Mammary epithelial cell (primary cell): ENCODE measurements at regions of chr1 and their contacts with region 1.

Region 1: DNA sequence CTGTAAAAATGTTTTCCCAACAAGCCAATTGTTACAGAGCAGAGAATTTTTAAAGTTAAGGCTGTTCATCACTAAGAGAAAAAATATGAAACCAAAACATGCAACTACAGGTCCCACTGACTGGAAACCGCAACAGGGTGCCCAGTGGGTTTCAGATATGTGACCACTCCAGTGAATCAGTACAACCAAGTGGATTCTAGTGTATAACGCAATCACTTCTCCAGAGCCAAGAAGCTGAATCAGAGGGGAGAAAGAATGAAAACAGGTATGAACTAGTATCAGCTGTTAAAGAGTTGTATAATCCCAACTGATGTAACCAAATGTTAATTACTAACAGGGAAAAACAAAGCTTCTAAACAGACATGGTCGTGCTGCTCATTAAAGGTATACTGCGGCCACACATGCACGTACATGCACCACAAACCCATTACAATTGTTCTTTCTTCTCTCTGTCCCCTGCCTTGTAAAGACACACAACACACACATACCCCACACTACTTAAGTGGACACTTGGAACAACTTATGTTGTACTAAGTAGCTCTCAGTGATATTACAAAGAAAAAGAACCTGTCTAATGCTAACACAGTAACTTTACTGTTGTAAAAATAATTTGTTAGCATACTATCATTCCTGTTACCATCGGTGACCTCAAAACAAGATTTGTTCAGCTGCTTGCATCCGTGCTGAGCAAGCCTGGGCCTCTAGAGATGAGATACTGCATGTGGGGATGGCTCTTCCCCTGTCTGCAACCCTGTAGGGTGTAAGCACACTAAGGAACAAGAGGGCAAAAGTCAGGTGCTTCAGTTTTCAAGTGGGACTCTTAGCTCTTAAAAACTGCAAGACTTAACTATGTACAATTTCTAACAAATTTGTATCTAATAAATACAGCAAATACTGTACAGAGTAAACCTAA is 74.2 kb downstream of the PTPN14 start:
- DNase-seq: peak; percentile 100
- H3K4me3 ChIP-seq: peak overlapping the region in 2 of 3 experiments; percentile 15 to 29
- H3K27ac ChIP-seq: peak overlapping the region; percentile 98
- H3K4me1 ChIP-seq: peaks cover 64% of the 10 kb centered on the region
- H3K27me3 ChIP-seq: no peaks in the 10 kb centered on the region
- CTCF ChIP-seq: no peak

Region 2: GRCh38 chr1:214213136-214213535 is 264.1 kb before region 1 on chr1:
- CTCF ChIA-PET with region 1: no interaction called
- dilution Hi-C with region 1: no loop called
- in situ Hi-C with region 1: no loop called
- intact Hi-C with region 1: no loop called
- DNase-seq: peak; percentile 95
- H3K4me3 ChIP-seq: no peak overlapping the region
- H3K27ac ChIP-seq: peak overlapping the region; percentile 60
- H3K4me1 ChIP-seq: peaks cover 52% of the 10 kb centered on the region
- H3K27me3 ChIP-seq: no peaks in the 10 kb centered on the region
- CTCF ChIP-seq: peak in 1 of 2 donors; percentile 31

Region 3: GRCh38 chr1:214337511-214337910 is 139.7 kb before region 1 on chr1:
- CTCF ChIA-PET with region 1: no interaction called
- dilution Hi-C with region 1: no loop called
- in situ Hi-C with region 1: no loop called
- intact Hi-C with region 1: no loop called
- DNase-seq: no peak
- H3K4me3 ChIP-seq: no peak overlapping the region
- H3K27ac ChIP-seq: peak overlapping the region; percentile 22
- H3K4me1 ChIP-seq: no peaks in the 10 kb centered on the region
- H3K27me3 ChIP-seq: no peaks in the 10 kb centered on the region
- CTCF ChIP-seq: no peak

Region 4: GRCh38 chr1:214397497-214397896 is 79.7 kb before region 1 on chr1:
- CTCF ChIA-PET with region 1: no interaction called
- dilution Hi-C with region 1: no loop called
- in situ Hi-C with region 1: no loop called
- intact Hi-C with region 1: loop called (anchors 2 kb)
- DNase-seq: no peak
- H3K4me3 ChIP-seq: no peak overlapping the region
- H3K27ac ChIP-seq: no peak overlapping the region
- H3K4me1 ChIP-seq: peaks cover 4% of the 10 kb centered on the region
- H3K27me3 ChIP-seq: no peaks in the 10 kb centered on the region
- CTCF ChIP-seq: no peak

Region 5: GRCh38 chr1:214422137-214422671 is 55.0 kb before region 1 on chr1:
- CTCF ChIA-PET with region 1: no interaction called
- dilution Hi-C with region 1: loop called (anchors 5 kb)
- in situ Hi-C with region 1: no loop called
- intact Hi-C with region 1: no loop called
- DNase-seq: peak; percentile 88
- H3K4me3 ChIP-seq: peak overlapping the region in 1 of 3 experiments; percentile 14
- H3K27ac ChIP-seq: peak overlapping the region; percentile 92
- H3K4me1 ChIP-seq: peaks cover 86% of the 10 kb centered on the region
- H3K27me3 ChIP-seq: no peaks in the 10 kb centered on the region
- CTCF ChIP-seq: no peak

Region 6: DNA sequence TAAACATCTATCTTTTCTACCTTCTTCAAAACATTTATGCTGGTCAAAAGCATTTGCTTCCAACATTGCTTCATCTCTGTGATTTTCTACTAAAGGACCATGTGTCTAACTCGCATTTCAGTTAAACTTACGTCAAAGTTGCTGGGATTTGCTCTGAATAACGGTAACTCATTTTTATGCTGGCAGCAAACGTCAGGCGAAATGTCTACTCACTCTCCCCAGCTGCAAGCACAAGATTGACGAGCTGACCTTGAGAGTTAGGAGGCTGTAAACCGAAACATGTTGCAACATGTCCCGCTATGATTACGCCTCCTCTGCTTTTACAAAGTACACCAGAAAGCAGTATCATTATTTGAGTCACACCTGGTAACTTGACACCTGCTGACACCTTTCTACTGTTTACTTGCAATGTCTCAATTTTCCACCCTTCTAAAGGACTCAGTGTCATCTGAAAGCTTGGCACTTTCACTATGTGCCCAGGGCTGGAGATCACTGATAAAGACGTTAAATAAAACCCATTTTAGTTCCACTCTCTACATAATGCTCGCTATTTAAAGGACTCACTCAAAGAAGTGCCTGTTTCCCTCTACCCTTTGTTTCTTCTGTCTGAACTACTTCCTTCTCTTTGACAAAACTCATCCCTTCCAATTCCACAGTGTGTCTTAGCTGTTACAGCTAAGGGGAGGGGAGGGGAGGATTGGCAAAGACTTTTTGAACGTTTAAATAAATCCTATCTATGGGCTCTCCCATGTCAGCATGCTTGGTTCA is 37.7 kb before region 1 on chr1:
- CTCF ChIA-PET with region 1: no interaction called
- dilution Hi-C with region 1: no loop called
- in situ Hi-C with region 1: no loop called
- intact Hi-C with region 1: loop called (anchors 1 kb)
- DNase-seq: peak; percentile 99
- H3K4me3 ChIP-seq: peak overlapping the region in 2 of 3 experiments; percentile 7 to 28
- H3K27ac ChIP-seq: peak overlapping the region; percentile 100
- H3K4me1 ChIP-seq: peaks cover 55% of the 10 kb centered on the region
- H3K27me3 ChIP-seq: no peaks in the 10 kb centered on the region
- CTCF ChIP-seq: no peak

Region 7: GRCh38 chr1:214494706-214495105 is 17.5 kb after region 1 on chr1:
- CTCF ChIA-PET with region 1: no interaction called
- dilution Hi-C with region 1: no loop called
- in situ Hi-C with region 1: no loop called
- intact Hi-C with region 1: loop called (anchors 1 kb)
- DNase-seq: peak; percentile 78
- H3K4me3 ChIP-seq: no peak overlapping the region
- H3K27ac ChIP-seq: peak overlapping the region; percentile 78
- H3K4me1 ChIP-seq: peaks cover 30% of the 10 kb centered on the region
- H3K27me3 ChIP-seq: no peaks in the 10 kb centered on the region
- CTCF ChIP-seq: no peak

Region 8: DNA sequence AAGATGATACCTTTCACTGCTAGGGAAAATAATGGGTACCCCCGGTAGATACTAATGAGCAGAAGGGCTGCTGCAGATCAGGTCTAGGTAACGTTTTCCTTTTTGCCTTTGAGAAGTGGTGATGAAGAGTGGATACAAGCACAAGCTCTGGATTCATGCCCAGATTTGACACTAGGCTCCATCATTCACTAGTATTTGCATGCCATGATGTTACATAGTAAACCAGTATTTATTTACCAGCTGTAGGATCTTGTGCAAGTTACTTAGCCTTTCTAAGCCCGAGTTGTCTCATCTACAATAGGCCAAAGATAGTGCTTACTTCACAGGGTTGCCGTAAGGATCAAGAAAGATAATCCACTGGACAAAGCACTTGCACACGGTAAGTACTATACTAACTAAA is 60.0 kb after region 1 on chr1:
- CTCF ChIA-PET with region 1: no interaction called
- dilution Hi-C with region 1: no loop called
- in situ Hi-C with region 1: no loop called
- intact Hi-C with region 1: no loop called
- DNase-seq: peak; percentile 36
- H3K4me3 ChIP-seq: no peak overlapping the region
- H3K27ac ChIP-seq: no peak overlapping the region
- H3K4me1 ChIP-seq: peaks cover 24% of the 10 kb centered on the region
- H3K27me3 ChIP-seq: no peaks in the 10 kb centered on the region
- CTCF ChIP-seq: no peak

Region 9: GRCh38 chr1:214551436-214552173 is 74.4 kb after region 1 on chr1 and contains the start of gene PTPN14:
- CTCF ChIA-PET with region 1: interaction called, 4 read pairs
- dilution Hi-C with region 1: loop called (anchors 5 kb)
- in situ Hi-C with region 1: no loop called
- intact Hi-C with region 1: loop called (anchors 1 kb)
- DNase-seq: peak; percentile 92
- H3K4me3 ChIP-seq: peak within 1 kb of the TSS; percentile 76 to 96 (median 90)
- H3K27ac ChIP-seq: peak within 1 kb of the TSS; percentile 99
- H3K4me1 ChIP-seq: peaks cover 35% of the 10 kb centered on the region
- H3K27me3 ChIP-seq: no peaks in the 10 kb centered on the region
- CTCF ChIP-seq: peak; percentile 22 to 55
- total RNA-seq, gene PTPN14: 152 to 157 TPM

Region 10: DNA sequence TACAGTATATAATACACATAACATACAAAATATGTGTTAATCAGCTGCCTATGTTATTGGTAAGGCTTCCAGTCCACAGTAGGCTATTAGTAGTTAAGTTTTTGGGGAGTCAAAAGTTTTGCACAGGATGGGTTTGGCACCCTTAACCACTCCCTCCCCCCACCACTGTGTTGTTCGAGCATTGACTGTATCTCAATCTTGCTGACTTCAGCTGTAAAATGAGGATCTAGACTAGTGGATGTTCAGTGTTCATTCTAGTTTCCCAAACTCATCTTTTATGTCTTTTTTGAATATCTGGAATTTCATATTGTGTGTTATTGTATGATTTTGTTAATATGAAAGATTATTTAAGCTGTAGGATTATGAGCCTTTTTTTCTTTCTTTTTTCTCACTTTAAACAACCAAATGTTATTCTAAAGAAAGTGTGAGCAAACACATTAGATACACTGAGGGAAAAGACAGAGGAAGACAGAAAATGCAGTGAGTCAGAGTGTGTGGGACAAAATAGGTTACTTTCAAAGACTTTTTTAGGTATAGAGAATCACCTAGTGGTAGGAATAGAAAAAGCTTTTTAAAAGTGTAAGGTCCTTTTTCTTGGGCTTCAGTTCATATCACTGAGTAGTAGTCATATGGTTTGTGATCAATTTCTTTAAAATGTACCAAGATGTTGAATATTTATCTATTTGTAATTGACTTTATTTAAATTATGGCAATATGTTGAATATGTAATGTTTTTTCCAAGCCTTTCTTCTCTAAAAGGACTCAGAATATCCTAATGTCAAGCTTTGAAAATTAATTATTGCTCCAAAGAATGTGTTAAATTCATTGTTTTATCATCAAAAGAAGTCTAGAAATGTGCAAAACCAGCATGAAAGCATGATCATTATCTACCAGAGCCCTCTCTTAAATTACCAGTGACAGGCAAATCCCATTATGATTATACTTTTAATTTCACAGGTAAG is 107.9 kb after region 1 on chr1:
- CTCF ChIA-PET with region 1: interaction called, 5 read pairs
- dilution Hi-C with region 1: loop called (anchors 5 kb)
- in situ Hi-C with region 1: no loop called
- intact Hi-C with region 1: no loop called
- DNase-seq: peak; percentile 64
- H3K4me3 ChIP-seq: no peak overlapping the region
- H3K27ac ChIP-seq: peak overlapping the region; percentile 54
- H3K4me1 ChIP-seq: peaks cover 39% of the 10 kb centered on the region
- H3K27me3 ChIP-seq: no peaks in the 10 kb centered on the region
- CTCF ChIP-seq: peak; percentile 79 to 98